ENCODE measurements at regions of chr6 and their contacts with region 1.

Region 1: DNA sequence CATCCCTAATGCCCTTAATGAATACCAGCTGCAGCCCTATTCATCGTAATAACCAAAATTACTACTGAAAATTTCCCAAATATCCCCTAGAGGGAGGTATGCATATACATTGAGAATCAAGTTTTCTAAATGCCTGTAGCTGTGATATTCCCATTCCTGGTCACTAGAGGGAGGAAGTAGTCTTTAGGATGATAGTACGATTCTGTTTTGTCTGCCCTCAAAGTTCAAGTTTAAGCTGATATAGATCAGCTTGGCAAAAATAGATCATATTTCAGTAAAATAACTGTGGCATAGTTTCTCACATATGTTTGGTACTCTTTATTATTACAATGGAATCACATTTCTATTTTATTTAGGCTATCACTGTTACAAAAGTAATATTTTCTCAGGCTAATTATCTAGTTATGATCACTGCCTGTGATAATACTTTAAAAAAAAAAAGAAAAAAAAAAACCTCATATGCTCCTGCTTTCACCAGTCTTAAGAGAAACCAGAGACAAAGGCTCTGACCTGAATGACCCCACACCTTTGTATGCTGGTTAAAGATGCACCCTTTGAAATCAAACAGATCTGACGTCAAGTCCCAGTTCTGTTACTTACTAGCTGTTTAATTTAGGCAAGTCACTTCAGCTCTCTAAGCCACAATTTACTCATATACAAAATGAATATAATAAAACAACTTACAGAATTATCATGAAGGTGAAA is 11.0 kb downstream of the TSPYL1 start:
- DNase-seq: no peak
- ATAC-seq: peak; percentile 70
- H3K4me3 Mint-ChIP-seq: no peak overlapping the region
- H3K27ac Mint-ChIP-seq: no peak overlapping the region
- H3K4me1 Mint-ChIP-seq: peaks cover 8% of the 10 kb centered on the region
- H3K27me3 Mint-ChIP-seq: no peaks in the 10 kb centered on the region

Region 2: DNA sequence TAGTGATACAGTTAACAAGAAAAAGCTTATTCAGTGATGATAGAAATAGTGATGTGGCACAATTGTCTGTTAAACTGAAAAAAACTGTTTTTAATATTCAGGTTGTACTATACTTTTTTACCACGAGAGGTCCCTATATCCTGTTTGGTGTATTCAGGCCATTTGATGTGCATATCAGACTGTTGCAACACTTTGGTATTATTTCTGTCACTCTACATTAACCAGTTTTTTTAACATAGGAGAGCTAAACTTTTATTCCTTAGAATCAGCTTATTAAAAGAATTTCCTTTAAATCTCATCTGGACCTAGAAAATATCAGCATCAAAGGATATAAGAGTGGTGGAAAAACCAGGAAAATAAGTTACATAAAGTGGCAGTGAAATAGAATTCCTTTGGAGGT is 51.7 kb before region 1 on chr6:
- CTCF ChIA-PET with region 1: interaction called, 14 read pairs
- DNase-seq: no peak
- ATAC-seq: peak; percentile 63
- H3K4me3 Mint-ChIP-seq: no peak overlapping the region
- H3K27ac Mint-ChIP-seq: no peak overlapping the region
- H3K4me1 Mint-ChIP-seq: no peaks in the 10 kb centered on the region
- H3K27me3 Mint-ChIP-seq: no peaks in the 10 kb centered on the region

Region 3: DNA sequence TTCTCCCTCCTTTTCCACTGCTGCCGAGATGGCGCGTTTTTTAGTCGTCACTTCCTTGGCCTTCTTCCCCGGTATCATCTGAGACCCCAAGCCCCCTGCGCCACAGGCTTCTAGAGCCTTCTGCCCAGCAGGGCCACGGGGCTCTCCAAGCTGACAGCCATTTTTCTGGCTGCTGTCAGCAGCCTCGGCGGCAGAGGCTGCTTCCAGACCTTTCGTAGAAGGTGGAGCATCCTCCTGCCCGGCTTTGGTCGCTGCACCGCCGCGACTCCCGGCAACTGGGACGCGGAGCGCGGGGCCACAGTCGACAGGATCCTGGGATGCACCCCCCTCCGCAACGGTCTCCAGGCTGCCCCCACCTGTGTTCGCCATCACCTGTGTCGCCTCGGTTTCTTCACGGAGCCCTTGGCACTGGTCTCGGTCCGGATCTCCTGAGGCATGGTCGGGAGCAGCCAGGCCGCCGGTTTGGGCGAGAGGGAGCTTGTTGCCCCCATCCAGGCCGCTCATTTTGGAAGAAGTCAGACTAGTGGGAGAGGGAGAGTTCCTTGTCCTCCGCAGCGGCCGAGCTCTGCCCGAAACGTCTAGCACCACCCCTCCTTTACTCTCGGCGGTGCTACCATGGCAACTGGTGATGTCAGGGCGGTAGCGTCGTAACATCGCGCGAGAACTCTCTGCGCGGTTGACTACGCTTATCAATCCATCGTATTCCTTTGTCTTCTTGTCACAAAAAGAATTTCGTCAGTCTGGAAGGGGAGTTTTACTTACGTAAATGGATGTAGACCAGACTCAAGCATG is 15.0 kb before region 1 on chr6 and contains the start of gene TSPYL4:
- CTCF ChIA-PET with region 1: interaction called, 12 read pairs
- DNase-seq: peak; percentile 95
- ATAC-seq: peak; percentile 96
- H3K4me3 Mint-ChIP-seq: no peak within 1 kb of the TSS
- H3K27ac Mint-ChIP-seq: no peak within 1 kb of the TSS
- H3K4me1 Mint-ChIP-seq: peaks cover 31% of the 10 kb centered on the region
- H3K27me3 Mint-ChIP-seq: no peaks in the 10 kb centered on the region
- total RNA-seq, gene TSPYL4: 15.1 to 17.3 TPM

Region 4: GRCh38 chr6:116279260-116280063 is 10.7 kb after region 1 on chr6 and contains the start of gene TSPYL1:
- CTCF ChIA-PET with region 1: interaction called, 11 read pairs
- DNase-seq: peak; percentile 98
- ATAC-seq: peak; percentile 89
- H3K4me3 Mint-ChIP-seq: peak within 1 kb of the TSS; percentile 100
- H3K27ac Mint-ChIP-seq: peak within 1 kb of the TSS; percentile 99
- H3K4me1 Mint-ChIP-seq: peaks cover 51% of the 10 kb centered on the region
- H3K27me3 Mint-ChIP-seq: no peaks in the 10 kb centered on the region
- total RNA-seq, gene TSPYL1: 39.5 to 41.3 TPM

Region 5: DNA sequence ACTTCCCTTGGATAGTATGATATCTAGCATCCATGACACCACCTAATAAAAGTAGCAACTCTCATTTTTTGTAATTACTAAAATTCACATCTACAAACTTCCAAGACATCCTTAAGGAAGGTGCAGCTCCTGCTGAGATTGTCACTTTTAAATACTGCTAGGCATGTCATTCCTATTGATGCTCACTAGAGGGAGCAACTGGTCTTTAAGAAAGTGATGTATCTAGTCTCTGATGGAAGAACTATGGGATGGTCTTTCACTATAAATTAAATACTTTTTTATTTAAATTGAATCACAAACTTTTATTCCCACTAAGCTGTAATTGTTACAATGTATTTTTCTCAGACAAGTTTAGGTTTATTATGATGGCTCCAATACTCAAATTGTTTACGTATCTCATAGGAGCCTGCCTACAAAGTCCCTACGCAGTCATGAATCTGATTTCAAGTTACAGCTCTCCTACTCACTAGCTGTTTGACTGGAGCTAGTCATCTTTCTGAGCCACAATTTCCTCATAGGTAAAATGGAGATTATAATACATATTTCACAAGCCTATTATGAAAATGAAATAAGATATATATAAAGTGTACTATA is 19.0 kb after region 1 on chr6:
- CTCF ChIA-PET with region 1: interaction called, 14 read pairs
- DNase-seq: no peak
- ATAC-seq: peak; percentile 55
- H3K4me3 Mint-ChIP-seq: no peak overlapping the region
- H3K27ac Mint-ChIP-seq: no peak overlapping the region
- H3K4me1 Mint-ChIP-seq: no peaks in the 10 kb centered on the region
- H3K27me3 Mint-ChIP-seq: no peaks in the 10 kb centered on the region

Region 6: GRCh38 chr6:116561377-116562018 is 292.8 kb after region 1 on chr6:
- CTCF ChIA-PET with region 1: interaction called, 12 read pairs
- DNase-seq: peak; percentile 78
- ATAC-seq: peak; percentile 72
- H3K4me3 Mint-ChIP-seq: no peak overlapping the region
- H3K27ac Mint-ChIP-seq: no peak overlapping the region
- H3K4me1 Mint-ChIP-seq: peaks cover 3% of the 10 kb centered on the region
- H3K27me3 Mint-ChIP-seq: peaks cover 20% of the 10 kb centered on the region